Thyroid gland (tissue), 4 donors: ENCODE measurements at regions of chr2 and their contacts with region 1.

Region 1: DNA sequence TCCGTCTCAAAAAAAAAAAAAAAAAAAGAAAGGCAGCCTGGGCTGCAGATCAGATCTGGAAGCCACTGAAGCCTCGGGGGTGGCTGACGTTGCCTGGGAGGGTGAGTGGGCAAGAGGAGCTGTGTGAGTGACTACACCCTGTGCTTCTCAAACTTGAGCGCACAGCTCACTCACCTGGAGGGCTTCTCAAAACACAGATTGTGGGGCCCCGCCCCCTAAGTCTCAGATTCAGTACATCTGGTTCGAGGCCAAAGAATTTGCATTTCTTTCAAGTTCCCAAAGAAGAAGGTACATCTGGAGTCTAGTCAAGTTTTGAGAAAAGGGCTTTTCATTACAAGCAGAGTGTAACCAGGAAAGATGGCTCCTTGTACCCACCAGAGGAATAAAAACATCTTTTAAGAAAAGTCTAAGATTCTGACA is 97.7 kb upstream of the CAB39 start:
- DNase-seq: peak; percentile 79 to 81
- H3K4me3 ChIP-seq: no peak overlapping the region
- H3K27ac ChIP-seq: no peak overlapping the region
- H3K4me1 ChIP-seq: no peaks in the 10 kb centered on the region
- H3K27me3 ChIP-seq: no peaks in the 10 kb centered on the region
- CTCF ChIP-seq: no peak
- POLR2A ChIP-seq: no peak

Region 2: DNA sequence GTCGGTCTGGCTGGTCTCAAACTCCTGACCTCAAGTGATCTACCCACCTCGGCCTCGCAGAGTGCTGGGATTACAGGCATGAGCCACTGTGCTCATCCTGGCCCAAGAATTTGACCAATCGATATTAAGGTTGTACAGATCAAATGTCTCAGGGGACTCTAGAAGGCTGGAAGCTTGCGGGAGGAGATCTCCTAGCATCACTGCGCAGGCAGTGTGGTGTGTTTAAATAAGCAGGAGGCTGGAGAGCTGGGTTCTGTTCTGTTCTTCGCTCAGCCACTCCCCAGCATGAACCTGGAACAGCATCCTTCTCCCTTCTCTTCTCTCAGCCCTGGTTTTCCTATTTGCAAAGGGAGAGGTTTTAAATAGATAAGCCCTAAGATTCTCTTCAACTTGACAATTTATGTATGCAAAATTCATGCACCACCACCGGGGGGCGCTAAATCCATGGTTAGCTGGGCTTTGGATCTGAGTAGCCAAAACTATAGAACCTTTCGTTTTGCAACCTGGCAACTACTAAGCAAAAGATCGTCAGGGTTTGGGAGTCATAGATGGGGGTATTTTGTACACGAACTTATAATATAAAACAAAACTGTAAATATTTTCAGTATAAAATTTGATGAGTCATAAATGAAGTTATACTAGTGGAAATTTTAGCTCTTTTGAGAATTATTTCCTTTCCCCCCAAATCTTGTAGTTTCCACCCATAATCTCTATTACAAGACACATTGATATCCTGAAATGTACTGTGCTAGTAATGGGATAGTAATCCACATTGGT is 606.8 kb before region 1 on chr2:
- intact Hi-C with region 1: loop called (anchors 5 kb)
- DNase-seq: peak; percentile 48 to 78
- H3K4me3 ChIP-seq: no peak overlapping the region
- H3K27ac ChIP-seq: no peak overlapping the region
- H3K4me1 ChIP-seq: no peaks in the 10 kb centered on the region
- H3K27me3 ChIP-seq: no peaks in the 10 kb centered on the region
- CTCF ChIP-seq: peak; percentile 53 to 74 (median 66)
- POLR2A ChIP-seq: no peak

Region 3: DNA sequence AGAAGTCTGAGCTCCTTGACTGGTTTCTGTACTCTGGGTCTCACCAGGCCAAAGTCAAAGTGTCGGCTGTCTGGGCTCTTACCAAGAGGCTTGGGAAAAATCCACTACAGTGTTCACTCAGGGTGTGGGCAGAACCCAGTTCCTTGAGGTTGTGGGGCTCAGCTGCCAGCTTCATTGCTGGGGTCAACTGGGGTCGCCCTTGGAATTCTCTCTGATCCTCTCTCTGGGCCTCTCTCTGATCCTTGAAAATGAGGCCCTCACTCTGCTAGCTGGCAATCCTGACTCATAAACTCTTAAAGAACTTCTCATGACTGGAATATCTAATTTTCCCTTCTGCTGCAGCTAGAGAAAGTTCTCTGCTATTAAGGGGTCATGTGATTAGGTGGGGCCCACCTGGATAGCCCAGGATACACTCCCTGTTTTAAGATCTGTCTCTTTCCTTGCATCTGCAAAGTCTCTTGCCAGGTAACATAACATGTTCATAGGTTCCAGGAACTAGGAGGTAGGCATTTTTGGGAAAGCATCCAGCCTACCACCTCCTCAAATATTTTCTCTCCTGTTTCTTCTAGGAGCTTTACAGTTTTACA is 461.4 kb before region 1 on chr2:
- intact Hi-C with region 1: loop called (anchors 10 kb)
- DNase-seq: peak; percentile 8 to 14
- H3K4me3 ChIP-seq: no peak overlapping the region
- H3K27ac ChIP-seq: no peak overlapping the region
- H3K4me1 ChIP-seq: no peaks in the 10 kb centered on the region
- H3K27me3 ChIP-seq: no peaks in the 10 kb centered on the region
- CTCF ChIP-seq: no peak
- POLR2A ChIP-seq: no peak